Sigmoid colon (tissue), 7 donors: ENCODE measurements at regions of chr7 and their contacts with region 1.

Region 1: DNA sequence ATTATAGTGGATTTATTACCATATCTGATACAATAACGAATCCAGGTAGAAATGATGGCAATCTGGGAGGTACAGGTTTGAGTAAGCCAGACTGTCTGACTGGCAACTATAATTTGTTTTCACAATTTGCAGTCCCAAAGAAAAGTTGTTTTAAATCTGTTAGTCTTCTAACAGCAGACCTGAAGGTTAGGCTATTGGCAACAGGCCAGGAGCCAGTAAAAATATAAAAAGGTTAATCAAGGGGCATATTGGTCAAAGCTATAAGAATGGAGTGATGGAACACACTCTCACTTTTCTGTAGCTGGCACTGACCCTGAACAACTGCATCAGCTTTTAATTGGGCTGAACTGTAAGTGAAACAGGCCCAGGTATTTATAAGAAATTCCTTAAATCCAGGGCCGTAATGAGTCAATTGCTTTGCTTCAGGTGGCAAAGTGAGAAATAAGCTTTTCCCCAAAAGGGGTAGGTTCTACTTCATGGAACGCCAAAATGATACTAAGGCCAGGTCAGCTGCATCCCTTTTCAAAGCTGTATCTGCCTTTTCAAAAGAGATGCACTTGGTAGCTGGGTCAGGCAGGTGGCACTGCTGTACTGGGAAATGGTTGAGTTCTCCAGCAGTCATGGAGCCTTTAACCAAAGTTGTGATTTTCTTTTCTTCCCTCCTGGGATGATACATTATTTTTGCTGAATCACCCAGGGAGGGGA is 7.0 kb upstream of the GPR22 start:
- DNase-seq: peak; percentile 80
- H3K4me3 ChIP-seq: no peak overlapping the region
- H3K27ac ChIP-seq: no peak overlapping the region
- H3K4me1 ChIP-seq: no peaks in the 10 kb centered on the region
- H3K27me3 ChIP-seq: no peaks in the 10 kb centered on the region
- CTCF ChIP-seq: peak; percentile 52 to 78 (median 66)
- EP300 ChIP-seq: no peak
- POLR2A ChIP-seq: no peak

Region 2: DNA sequence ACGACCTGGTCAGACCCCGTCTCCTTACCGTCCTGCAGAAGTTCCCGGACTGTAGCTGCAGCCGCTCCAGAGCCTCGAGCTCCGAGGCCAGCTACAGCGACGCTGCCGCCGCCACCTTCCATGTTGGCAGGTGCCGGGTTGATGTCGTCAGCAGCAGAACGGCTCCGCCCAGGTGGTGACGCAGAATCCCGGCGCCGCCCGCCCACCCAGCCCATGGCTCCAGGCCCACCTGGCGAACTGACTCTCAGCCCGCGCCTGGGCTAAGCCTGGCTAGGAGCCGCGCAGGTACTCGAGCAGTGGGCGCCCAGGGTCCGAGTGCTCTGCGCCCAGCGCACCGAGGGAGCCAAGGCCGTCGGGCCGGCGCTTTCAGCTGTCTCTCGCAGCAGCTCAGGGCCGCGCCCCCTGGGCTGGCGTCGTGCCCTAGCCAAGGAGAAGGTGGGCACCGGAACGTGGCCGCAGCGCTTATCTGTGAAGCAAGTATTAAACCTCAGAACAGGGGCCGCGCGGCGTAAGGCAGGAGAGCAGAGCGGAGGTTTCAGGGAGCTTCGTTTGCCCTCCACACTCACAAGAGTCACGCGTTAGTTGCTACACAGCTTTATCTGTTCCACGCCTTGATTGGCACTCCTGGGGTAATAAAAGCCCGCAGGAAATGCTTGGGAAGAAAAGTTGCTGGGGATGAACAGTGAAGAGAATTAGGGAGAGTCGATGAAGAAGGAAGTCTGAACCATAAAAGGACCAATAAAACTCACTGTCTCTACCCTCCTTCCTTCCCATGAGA is 101.1 kb after region 1 on chr7 and contains the starts of genes COG5 and DUS4L:
- intact Hi-C with region 1: loop called (anchors 10 kb)
- DNase-seq: peak; percentile 89
- H3K4me3 ChIP-seq: peak within 1 kb of the TSS; percentile 85 to 98 (median 90)
- H3K27ac ChIP-seq: peak within 1 kb of the TSS; percentile 92 to 96 (median 93)
- H3K4me1 ChIP-seq: peaks cover 0 to 49% (median 30%) of the 10 kb centered on the region in 4 donors
- H3K27me3 ChIP-seq: no peaks in the 10 kb centered on the region
- CTCF ChIP-seq: no peak
- EP300 ChIP-seq: peak in 1 of 4 donors; percentile 9
- POLR2A ChIP-seq: peak in 1 of 2 donors; percentile 58
- total RNA-seq, gene COG5: 26.8 to 73.4 (median 30.2) TPM
- total RNA-seq, gene DUS4L: 5.4 to 10.3 (median 8.3) TPM

Region 3: DNA sequence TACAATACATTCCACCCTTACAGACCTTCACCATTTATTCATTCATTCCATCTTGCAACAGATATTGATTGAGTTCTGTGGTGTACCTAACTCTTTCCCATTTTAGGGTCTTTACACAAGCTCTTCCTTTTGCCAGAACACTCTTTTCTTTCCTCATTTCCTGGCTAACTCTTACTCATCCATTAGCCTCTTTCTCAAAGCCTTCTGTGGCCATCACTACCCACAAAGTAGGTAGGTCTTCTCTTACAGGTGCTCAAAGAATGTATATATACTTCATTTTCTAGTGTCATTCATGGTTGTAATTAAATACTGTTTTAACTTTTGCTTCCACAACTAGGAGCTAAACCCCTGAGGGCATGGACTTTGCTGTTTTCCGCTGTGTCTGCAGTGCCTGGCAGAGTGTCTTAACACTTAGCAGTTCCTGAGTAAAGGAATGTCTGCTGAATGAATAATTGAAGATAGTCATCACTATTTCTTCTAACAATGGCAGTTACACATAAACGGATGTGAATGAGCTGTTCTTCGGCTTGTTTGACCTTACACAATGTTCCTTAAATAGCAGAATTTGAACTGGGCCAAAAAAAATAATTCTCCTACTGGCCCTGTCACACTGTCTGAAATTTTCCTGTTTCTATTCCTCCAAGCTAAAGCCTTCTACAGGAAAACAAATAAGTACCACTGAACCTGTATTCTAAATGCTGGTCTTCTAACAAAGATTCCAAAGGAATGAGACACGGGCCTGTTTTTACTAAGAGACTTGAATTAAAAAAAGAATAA is 132.3 kb after region 1 on chr7:
- intact Hi-C with region 1: loop called (anchors 10 kb)
- DNase-seq: no peak
- H3K4me3 ChIP-seq: no peak overlapping the region
- H3K27ac ChIP-seq: peak overlapping the region; percentile 10 to 81 (median 70)
- H3K4me1 ChIP-seq: peaks cover 0 to 51% (median 28%) of the 10 kb centered on the region in 4 donors
- H3K27me3 ChIP-seq: no peaks in the 10 kb centered on the region
- CTCF ChIP-seq: no peak
- EP300 ChIP-seq: no peak
- POLR2A ChIP-seq: no peak

Region 4: DNA sequence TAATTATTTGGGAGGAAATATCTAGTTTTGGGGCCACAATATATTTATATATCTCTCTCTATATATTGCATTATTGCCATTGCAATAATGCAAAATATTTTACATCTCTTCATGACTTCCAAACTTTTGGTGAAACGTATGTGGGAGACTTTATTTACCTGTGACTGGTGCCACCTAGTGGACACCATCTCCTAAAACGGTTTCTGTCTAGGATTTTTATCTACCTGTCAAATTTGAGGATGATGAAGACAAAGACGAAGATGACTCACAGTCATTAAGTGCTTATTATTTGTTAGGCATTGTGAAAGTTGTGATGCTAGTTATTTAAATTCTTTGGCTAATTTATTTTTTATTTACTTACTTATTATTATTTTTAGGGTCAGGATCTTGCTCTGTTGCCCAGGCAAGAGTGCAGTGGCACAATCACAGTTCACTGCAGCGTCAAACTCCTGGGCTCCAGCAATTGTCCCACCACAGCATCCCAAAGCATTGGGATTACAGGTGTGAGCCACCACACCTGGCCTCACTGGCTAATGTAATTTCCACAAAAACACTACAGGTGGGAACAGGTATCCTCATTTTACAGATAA is 262.4 kb after region 1 on chr7:
- intact Hi-C with region 1: loop called (anchors 1 kb)
- DNase-seq: no peak
- H3K4me3 ChIP-seq: no peak overlapping the region
- H3K27ac ChIP-seq: no peak overlapping the region
- H3K4me1 ChIP-seq: no peaks in the 10 kb centered on the region
- H3K27me3 ChIP-seq: no peaks in the 10 kb centered on the region
- CTCF ChIP-seq: peak; percentile 44 to 69 (median 50)
- EP300 ChIP-seq: no peak
- POLR2A ChIP-seq: no peak

Region 5: GRCh38 chr7:108146070-108146837 is 683.4 kb after region 1 on chr7:
- intact Hi-C with region 1: loop called (anchors 2 kb)
- DNase-seq: peak; percentile 78
- H3K4me3 ChIP-seq: peak overlapping the region in 3 of 4 donors; percentile 13 to 31 (median 28)
- H3K27ac ChIP-seq: peak overlapping the region in 2 of 4 donors; percentile 16 to 41
- H3K4me1 ChIP-seq: peaks cover 0 to 26% (median 16%) of the 10 kb centered on the region in 4 donors
- H3K27me3 ChIP-seq: no peaks in the 10 kb centered on the region
- CTCF ChIP-seq: peak; percentile 80 to 93 (median 88)
- EP300 ChIP-seq: no peak
- POLR2A ChIP-seq: no peak